Activated naive CD4-positive, alpha-beta T cell treated with anti-CD3 and anti-CD28 coated beads for 36 hours (primary cell): ENCODE measurements at regions of chr2 and their contacts with region 1.

Region 1: GRCh38 chr2:241598480-241598879 is 38.5 kb downstream of the THAP4 start:
- DNase-seq: no peak
- H3K4me3 Mint-ChIP-seq: no peak overlapping the region
- H3K27ac Mint-ChIP-seq: no peak overlapping the region
- H3K4me1 Mint-ChIP-seq: no peaks in the 10 kb centered on the region
- H3K27me3 Mint-ChIP-seq: no peaks in the 10 kb centered on the region

Region 2: DNA sequence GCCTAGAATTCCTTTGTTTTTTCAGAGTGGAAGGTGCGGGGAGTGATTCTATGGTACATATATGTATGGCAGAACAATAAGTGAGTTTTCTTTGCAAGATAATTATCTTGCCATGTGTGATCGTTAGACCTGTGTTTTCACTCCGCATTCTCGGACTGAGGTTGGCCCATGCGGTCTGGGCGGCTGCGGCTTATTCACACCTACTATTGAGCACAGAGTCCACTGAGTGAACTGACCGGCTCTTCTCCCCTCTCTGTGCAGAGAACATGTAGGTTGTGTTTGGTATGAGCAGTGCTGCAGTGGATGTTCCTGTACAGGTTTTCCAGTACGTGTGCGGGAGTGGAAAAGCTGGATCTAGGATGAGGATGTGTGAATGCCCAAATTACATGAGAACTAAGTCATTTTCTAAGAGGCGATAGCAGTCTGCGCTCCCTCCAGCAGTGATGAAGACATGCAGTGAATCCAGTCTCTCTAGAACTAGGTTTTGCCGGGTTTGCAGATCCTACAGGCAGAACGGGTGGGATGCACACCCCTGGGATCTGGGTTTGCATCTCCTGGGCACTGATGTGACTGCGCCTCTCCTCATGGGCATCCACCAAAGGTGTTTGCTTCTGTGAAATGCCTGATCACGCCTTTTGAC is 523.5 kb before region 1 on chr2:
- CTCF ChIA-PET with region 1: no interaction called
- intact Hi-C with region 1: loop called (anchors 5 kb)
- DNase-seq: no peak
- H3K4me3 Mint-ChIP-seq: no peak overlapping the region
- H3K27ac Mint-ChIP-seq: no peak overlapping the region
- H3K4me1 Mint-ChIP-seq: peaks cover 5% of the 10 kb centered on the region
- H3K27me3 Mint-ChIP-seq: no peaks in the 10 kb centered on the region

Region 3: GRCh38 chr2:241177526-241178334 is 420.8 kb before region 1 on chr2:
- CTCF ChIA-PET with region 1: no interaction called
- intact Hi-C with region 1: no loop called
- DNase-seq: no peak
- H3K4me3 Mint-ChIP-seq: no peak overlapping the region
- H3K27ac Mint-ChIP-seq: no peak overlapping the region
- H3K4me1 Mint-ChIP-seq: peaks cover 8% of the 10 kb centered on the region
- H3K27me3 Mint-ChIP-seq: no peaks in the 10 kb centered on the region